ENCODE measurements at regions of chr15 and their contacts with region 1.

Region 1: DNA sequence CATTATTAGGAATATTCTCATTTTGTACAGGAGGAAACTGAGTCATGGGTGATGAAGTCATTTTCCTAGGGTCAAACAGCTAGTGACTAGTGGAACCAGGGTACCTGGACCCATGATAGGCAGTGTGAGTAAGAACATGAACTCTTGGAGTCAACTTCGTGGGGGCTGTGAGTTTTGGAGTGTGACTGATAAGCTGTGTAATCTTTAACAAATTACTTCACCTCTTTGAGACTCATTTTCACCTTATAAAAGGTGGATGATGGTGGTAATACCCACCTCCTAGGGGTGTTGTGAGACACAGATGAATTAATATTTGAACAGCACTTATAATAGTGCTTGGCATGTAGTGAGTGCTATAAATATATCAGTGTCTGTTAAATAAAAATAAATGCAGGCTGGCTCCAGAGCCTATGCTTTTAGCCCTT is 9.1 kb downstream of the SEMA6D start:
- DNase-seq: no peak
- H3K4me3 ChIP-seq: no peak overlapping the region
- H3K27ac ChIP-seq: no peak overlapping the region
- H3K4me1 ChIP-seq: 0 out of 2 replicates have a peak, but pooled peaks cover 5% of the 10 kb centered on the region
- H3K27me3 ChIP-seq: no peaks in the 10 kb centered on the region

Region 2: GRCh38 chr15:48285329-48286214 is 559.2 kb after region 1 on chr15:
- in situ Hi-C with region 1: loop called (anchors 25 kb)
- DNase-seq: peak; percentile 77
- H3K4me3 ChIP-seq: peak overlapping the region; percentile 67
- H3K27ac ChIP-seq: no peak overlapping the region
- H3K4me1 ChIP-seq: peaks cover 12% of the 10 kb centered on the region
- H3K27me3 ChIP-seq: no peaks in the 10 kb centered on the region